ENCODE measurements at regions of chr10 and their contacts with region 1.

Region 1: GRCh38 chr10:98391578-98391991 is 23.4 kb downstream of the PYROXD2 start:
- DNase-seq: no peak
- H3K4me3 ChIP-seq: no peak overlapping the region
- H3K27me3 ChIP-seq: no peaks in the 10 kb centered on the region
- CTCF ChIP-seq: no peak

Region 2: GRCh38 chr10:98170249-98171117 is 221.1 kb before region 1 on chr10:
- CTCF ChIA-PET with region 1: interaction called, 49 read pairs
- POLR2A ChIA-PET with region 1: no interaction called
- DNase-seq: no peak
- H3K4me3 ChIP-seq: no peak overlapping the region
- H3K27me3 ChIP-seq: no peaks in the 10 kb centered on the region
- CTCF ChIP-seq: peak; percentile 80

Region 3: DNA sequence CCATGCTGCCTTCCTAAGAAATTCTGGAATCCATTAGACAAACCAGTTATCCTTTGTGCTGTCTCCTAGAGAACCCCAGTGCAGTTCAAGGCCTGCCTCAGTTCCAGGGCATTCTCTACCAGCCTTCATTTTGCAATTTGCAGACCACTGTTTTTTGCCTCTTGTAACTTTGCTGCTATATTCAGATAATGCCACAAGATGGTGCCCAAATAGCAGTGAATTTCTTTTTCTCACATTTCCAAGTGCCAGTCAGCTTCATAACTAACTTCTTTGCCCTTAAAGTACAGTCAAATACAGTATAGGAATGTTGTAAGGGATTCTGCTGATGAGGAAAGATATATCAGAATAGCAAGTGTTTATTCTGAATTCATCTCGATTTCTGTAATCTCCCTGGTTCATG is 148.8 kb before region 1 on chr10:
- CTCF ChIA-PET with region 1: interaction called, 30 read pairs
- POLR2A ChIA-PET with region 1: interaction called, 6 read pairs
- DNase-seq: no peak
- H3K4me3 ChIP-seq: no peak overlapping the region
- H3K27me3 ChIP-seq: no peaks in the 10 kb centered on the region
- CTCF ChIP-seq: peak; percentile 57

Region 4: GRCh38 chr10:98269072-98269912 is 122.3 kb before region 1 on chr10:
- CTCF ChIA-PET with region 1: interaction called, 18 read pairs
- POLR2A ChIA-PET with region 1: interaction called, 3 read pairs
- DNase-seq: peak; percentile 44
- H3K4me3 ChIP-seq: no peak overlapping the region
- H3K27me3 ChIP-seq: no peaks in the 10 kb centered on the region
- CTCF ChIP-seq: no peak

Region 5: GRCh38 chr10:98323221-98324164 is 68.1 kb before region 1 on chr10:
- CTCF ChIA-PET with region 1: interaction called, 15 read pairs
- POLR2A ChIA-PET with region 1: no interaction called
- DNase-seq: peak; percentile 99
- H3K4me3 ChIP-seq: no peak overlapping the region
- H3K27me3 ChIP-seq: no peaks in the 10 kb centered on the region
- CTCF ChIP-seq: no peak

Region 6: DNA sequence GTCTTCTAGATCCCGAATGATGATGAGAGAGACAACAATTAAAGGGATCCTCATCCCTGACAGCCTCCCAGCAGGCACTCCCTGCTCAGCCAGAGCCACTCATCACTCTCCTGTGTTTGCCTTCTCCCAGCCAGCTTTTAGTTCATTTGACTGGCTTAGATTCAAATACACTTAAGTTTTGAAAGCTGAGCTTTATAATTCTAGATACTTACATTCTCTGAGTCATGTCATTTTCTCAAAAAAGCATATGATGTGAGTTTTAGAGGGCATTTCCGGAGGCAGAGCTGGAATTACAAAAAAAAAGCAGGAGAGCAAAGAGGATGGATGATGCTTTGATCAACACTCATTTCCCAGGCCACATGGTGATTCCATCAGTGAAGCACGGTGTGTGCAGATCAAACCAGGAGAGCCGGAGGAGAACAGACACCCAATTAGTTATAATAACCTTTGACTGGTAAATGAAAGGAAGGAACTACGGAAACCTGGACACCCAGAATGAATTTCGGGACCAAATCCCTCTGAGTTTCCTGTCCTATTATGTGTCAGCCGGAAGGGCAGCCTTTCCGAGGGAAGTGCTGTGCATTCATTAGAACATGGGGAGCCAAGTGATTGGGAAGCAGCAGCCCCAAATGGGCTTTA is 136.7 kb after region 1 on chr10:
- CTCF ChIA-PET with region 1: no interaction called
- POLR2A ChIA-PET with region 1: no interaction called
- DNase-seq: peak; percentile 51
- H3K4me3 ChIP-seq: no peak overlapping the region
- H3K27me3 ChIP-seq: no peaks in the 10 kb centered on the region
- CTCF ChIP-seq: no peak

Measured in BJ (cell line).